Common myeloid progenitor, CD34-positive (primary cell): ENCODE measurements at regions of chr4 and their contacts with region 1.

Region 1: DNA sequence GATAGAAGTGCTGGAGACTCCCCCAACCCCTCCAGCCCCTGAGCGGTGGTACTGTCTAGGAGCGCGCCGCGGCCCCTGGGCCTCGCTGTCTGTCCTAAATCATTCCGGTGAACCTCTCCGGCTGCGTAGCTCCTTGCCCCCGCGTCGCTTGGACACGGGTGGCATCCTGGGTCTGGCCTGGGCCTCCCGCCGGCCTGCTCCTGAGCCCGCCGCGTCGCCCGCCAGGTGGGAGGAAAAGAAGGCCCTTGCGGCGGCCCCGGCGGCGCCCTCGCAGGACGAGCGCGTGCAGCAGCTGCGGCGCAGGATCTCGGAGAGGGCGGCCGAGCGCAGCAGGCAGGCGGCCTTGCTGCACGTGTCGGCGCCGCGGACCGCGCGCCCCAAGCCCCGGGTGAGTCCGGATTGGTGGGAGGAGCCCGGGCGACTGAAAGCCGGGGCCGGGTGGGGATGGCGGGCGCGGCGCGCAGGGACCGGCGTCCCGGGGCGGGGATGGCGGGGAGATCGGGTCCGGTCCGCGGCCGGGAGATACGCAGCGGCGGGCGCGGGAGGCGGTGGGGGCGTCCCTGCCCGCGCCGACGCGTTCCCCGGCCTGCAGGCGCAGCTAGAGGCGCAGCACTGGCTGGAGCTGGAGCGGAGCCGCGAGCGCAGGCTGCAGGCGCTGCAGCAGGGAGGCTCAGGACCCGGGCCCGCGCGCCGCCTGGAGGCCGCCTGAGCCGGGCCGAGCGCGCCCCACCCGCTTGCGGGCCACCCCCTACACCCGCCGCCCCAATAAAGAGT is 6.5 kb upstream of the RNF4 start:
- DNase-seq: peak; percentile 75 to 82 (median 78)
- H3K4me3 ChIP-seq: peak overlapping the region in 5 of 7 experiments; percentile 5 to 67 (median 59)
- H3K27ac ChIP-seq: no peak overlapping the region
- H3K4me1 ChIP-seq: peaks cover 0 to 13% (median 12%) of the 10 kb centered on the region in 4 experiments
- H3K27me3 ChIP-seq: peaks cover 0 to 10% (median 7%) of the 10 kb centered on the region in 5 experiments

Region 2: GRCh38 chr4:2290974-2291704 is 171.3 kb before region 1 on chr4:
- CTCF ChIA-PET with region 1: no interaction called
- POLR2A ChIA-PET with region 1: no interaction called
- DNase-seq: peak; percentile 73 to 96 (median 94)
- H3K4me3 ChIP-seq: peak overlapping the region in 4 of 7 experiments; percentile 13 to 37 (median 30)
- H3K27ac ChIP-seq: peak overlapping the region in 1 of 2 experiments; percentile 6
- H3K4me1 ChIP-seq: peaks cover 0 to 34% (median 31%) of the 10 kb centered on the region in 4 experiments
- H3K27me3 ChIP-seq: no peaks in the 10 kb centered on the region

Region 3: GRCh38 chr4:2451821-2452785 is 10.3 kb before region 1 on chr4:
- CTCF ChIA-PET with region 1: interaction called, 14 read pairs
- POLR2A ChIA-PET with region 1: interaction called, 3 read pairs
- DNase-seq: no peak
- H3K4me3 ChIP-seq: no peak overlapping the region
- H3K27ac ChIP-seq: no peak overlapping the region
- H3K4me1 ChIP-seq: no peaks in the 10 kb centered on the region
- H3K27me3 ChIP-seq: no peaks in the 10 kb centered on the region